ENCODE measurements at regions of chr9 and their contacts with region 1.

Region 1: GRCh38 chr9:77163884-77164283 is 13.4 kb upstream of the VPS13A start:
- DNase-seq: no peak
- ATAC-seq: no peak
- H3K4me3 ChIP-seq: no peak overlapping the region
- H3K4me3 Mint-ChIP-seq: no peak overlapping the region
- H3K27ac ChIP-seq: no peak overlapping the region
- H3K27ac Mint-ChIP-seq: no peak overlapping the region
- H3K4me1 ChIP-seq: no peaks in the 10 kb centered on the region
- H3K4me1 Mint-ChIP-seq: no peaks in the 10 kb centered on the region
- H3K27me3 ChIP-seq: no peaks in the 10 kb centered on the region
- H3K27me3 Mint-ChIP-seq: peaks cover 12 to 23% of the 10 kb centered on the region in 2 donors
- CTCF ChIP-seq: no peak

Region 2: GRCh38 chr9:76662476-76663281 is 501.2 kb before region 1 on chr9:
- intact Hi-C with region 1: no loop called
- DNase-seq: no peak
- ATAC-seq: peak in 1 of 3 donors; percentile 19
- H3K4me3 ChIP-seq: no peak overlapping the region
- H3K4me3 Mint-ChIP-seq: no peak overlapping the region
- H3K27ac ChIP-seq: no peak overlapping the region
- H3K27ac Mint-ChIP-seq: no peak overlapping the region
- H3K4me1 ChIP-seq: peaks cover 3% of the 10 kb centered on the region
- H3K4me1 Mint-ChIP-seq: peaks cover 20 to 25% of the 10 kb centered on the region in 2 donors
- H3K27me3 ChIP-seq: no peaks in the 10 kb centered on the region
- H3K27me3 Mint-ChIP-seq: peaks cover 0 to 4% of the 10 kb centered on the region in 2 donors
- CTCF ChIP-seq: no peak

Region 3: GRCh38 chr9:77224746-77225312 is 60.9 kb after region 1 on chr9:
- intact Hi-C with region 1: loop called (anchors 10 kb)
- DNase-seq: no peak
- ATAC-seq: no peak
- H3K4me3 ChIP-seq: no peak overlapping the region
- H3K4me3 Mint-ChIP-seq: no peak overlapping the region
- H3K27ac ChIP-seq: no peak overlapping the region
- H3K27ac Mint-ChIP-seq: no peak overlapping the region
- H3K4me1 ChIP-seq: no peaks in the 10 kb centered on the region
- H3K4me1 Mint-ChIP-seq: no peaks in the 10 kb centered on the region
- H3K27me3 ChIP-seq: no peaks in the 10 kb centered on the region
- H3K27me3 Mint-ChIP-seq: no peaks in the 10 kb centered on the region
- CTCF ChIP-seq: no peak

Region 4: GRCh38 chr9:77456829-77457437 is 293.0 kb after region 1 on chr9:
- intact Hi-C with region 1: loop called (anchors 2 kb)
- DNase-seq: peak; percentile 69 to 85
- ATAC-seq: peak; percentile 84 to 91 (median 87)
- H3K4me3 ChIP-seq: no peak overlapping the region
- H3K4me3 Mint-ChIP-seq: no peak overlapping the region
- H3K27ac ChIP-seq: no peak overlapping the region
- H3K27ac Mint-ChIP-seq: no peak overlapping the region
- H3K4me1 ChIP-seq: no peaks in the 10 kb centered on the region
- H3K4me1 Mint-ChIP-seq: peaks cover 15 to 19% of the 10 kb centered on the region in 2 donors
- H3K27me3 ChIP-seq: no peaks in the 10 kb centered on the region
- H3K27me3 Mint-ChIP-seq: peaks cover 9 to 39% of the 10 kb centered on the region in 2 donors
- CTCF ChIP-seq: peak; percentile 80

Measured in natural killer cell (primary cell).